ENCODE measurements at regions of chr9 and their contacts with region 1.

Region 1: GRCh38 chr9:36873247-36873875 is 160.7 kb downstream of the PAX5 start:
- DNase-seq: peak; percentile 86
- H3K4me3 ChIP-seq: no peak overlapping the region; a peak in 1 of 4 replicates
- H3K27ac ChIP-seq: no peak overlapping the region
- H3K4me1 ChIP-seq: peaks cover 0 to 5% of the 10 kb centered on the region in 2 experiments; a peak in 1 of 4 replicates
- H3K27me3 ChIP-seq: peaks cover 18% of the 10 kb centered on the region; the same call in 1 of the 2 replicates
- CTCF ChIP-seq: peak; percentile 92
- EP300 ChIP-seq: no peak
- RAD21 ChIP-seq: peak; percentile 89

Region 2: DNA sequence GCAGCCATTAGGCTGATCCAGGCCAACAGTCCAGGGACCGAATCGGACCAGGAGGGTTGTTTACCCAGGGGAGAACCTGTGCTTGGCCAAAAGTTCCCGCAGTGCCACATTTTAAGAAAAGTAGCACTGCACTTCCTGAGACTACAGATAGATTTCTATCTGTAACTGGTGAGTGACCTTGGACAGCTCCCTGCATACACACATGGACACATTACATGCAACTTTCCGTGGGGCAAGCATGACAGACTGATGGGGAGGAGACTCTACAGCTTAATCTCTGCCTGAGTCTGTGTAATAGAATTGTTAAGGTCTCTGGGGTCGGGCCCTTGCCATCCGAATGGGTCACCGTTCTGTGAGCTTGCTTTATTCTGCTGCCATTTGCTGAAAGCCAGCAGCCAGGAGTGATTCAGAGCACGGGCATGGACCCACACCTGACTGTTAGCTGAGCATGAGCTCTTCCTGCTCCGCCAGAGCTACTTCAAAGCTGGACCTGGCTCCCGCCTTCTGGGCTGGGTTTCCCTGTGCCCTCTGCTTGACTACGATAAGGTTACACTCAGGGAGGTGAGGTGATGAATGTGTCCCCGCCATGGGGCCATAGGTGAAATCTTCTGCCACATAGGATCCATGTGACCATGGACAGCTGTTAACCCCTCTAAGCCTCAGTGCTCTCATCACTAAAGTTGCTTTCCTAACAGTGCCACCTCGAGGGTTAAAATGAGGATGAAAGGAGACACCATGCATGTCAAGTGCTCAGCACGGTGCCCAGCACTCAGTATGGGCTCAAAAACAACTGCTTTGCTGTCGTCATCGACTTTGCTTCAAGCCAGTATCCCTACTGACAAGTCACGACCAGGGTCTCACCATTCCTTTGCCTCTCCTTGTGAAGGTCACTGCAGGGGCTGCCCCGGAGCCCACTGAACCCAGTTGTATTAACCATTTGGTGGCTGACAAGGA is 100.6 kb before region 1 on chr9:
- CTCF ChIA-PET with region 1: no interaction called
- POLR2A ChIA-PET with region 1: no interaction called
- DNase-seq: no peak
- H3K4me3 ChIP-seq: no peak overlapping the region
- H3K27ac ChIP-seq: no peak overlapping the region
- H3K4me1 ChIP-seq: no peaks in the 10 kb centered on the region
- H3K27me3 ChIP-seq: peaks cover 17% of the 10 kb centered on the region; the same call in 1 of the 2 replicates
- CTCF ChIP-seq: no peak
- EP300 ChIP-seq: no peak
- RAD21 ChIP-seq: no peak

Region 3: GRCh38 chr9:36891341-36891959 is 18.1 kb after region 1 on chr9:
- CTCF ChIA-PET with region 1: interaction called, 40 read pairs
- POLR2A ChIA-PET with region 1: no interaction called
- DNase-seq: peak; percentile 71
- H3K4me3 ChIP-seq: no peak overlapping the region
- H3K27ac ChIP-seq: peak overlapping the region in 1 of 2 experiments; percentile 36; a peak in 1 of 4 replicates
- H3K4me1 ChIP-seq: peaks cover 0 to 16% of the 10 kb centered on the region in 2 experiments; a peak in 2 of 4 replicates
- H3K27me3 ChIP-seq: peaks cover 18% of the 10 kb centered on the region; the same call in 1 of the 2 replicates
- CTCF ChIP-seq: no peak
- EP300 ChIP-seq: no peak
- RAD21 ChIP-seq: no peak

Region 4: DNA sequence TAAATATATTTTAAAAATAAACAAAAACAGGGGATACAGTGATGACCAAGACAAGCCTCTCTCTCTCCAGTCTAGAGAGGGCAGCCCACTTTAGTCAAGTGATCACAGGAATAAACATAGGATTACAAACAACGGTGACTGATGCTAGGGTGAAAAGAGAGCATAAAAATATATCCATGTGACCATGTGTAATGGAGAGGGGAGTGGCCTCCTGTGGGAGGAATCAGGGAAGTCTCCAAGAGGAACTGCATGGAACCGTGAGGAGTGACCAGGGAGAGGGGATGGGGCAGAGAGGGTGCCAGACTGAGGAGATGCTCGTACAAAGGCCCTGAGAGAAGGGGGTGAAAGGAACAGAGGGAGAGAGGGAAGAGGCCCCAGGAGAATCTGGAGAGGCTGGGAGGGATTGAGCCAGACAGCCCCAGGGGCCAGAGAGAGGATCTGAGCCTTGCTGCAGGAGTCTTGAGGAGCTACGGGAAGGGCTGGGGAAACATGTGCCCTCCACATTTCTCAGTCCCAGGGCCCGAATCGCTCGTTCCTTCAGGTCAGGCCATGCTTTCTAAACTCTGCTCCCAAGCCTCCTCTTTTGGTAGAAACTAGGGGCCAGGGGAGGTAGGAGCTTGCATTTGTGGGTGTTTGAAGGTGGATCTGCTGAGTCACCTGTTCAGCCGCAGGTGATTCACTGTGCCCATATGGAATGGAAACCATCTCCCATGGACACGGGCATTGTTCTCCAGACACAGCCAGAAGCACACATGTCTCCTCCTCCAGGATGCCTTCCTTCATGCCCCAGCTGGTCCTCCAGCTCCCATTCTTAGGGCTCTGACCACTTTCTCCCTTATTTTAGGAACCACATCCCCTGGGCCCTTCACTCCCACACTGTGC is 96.9 kb after region 1 on chr9:
- CTCF ChIA-PET with region 1: interaction called, 15 read pairs
- POLR2A ChIA-PET with region 1: no interaction called
- DNase-seq: no peak
- H3K4me3 ChIP-seq: no peak overlapping the region
- H3K27ac ChIP-seq: no peak overlapping the region
- H3K4me1 ChIP-seq: peaks cover 0 to 2% of the 10 kb centered on the region in 2 experiments; a peak in 1 of 4 replicates
- H3K27me3 ChIP-seq: no peaks in the 10 kb centered on the region; the same call in 1 of the 2 replicates
- CTCF ChIP-seq: no peak
- EP300 ChIP-seq: no peak
- RAD21 ChIP-seq: no peak

Region 5: DNA sequence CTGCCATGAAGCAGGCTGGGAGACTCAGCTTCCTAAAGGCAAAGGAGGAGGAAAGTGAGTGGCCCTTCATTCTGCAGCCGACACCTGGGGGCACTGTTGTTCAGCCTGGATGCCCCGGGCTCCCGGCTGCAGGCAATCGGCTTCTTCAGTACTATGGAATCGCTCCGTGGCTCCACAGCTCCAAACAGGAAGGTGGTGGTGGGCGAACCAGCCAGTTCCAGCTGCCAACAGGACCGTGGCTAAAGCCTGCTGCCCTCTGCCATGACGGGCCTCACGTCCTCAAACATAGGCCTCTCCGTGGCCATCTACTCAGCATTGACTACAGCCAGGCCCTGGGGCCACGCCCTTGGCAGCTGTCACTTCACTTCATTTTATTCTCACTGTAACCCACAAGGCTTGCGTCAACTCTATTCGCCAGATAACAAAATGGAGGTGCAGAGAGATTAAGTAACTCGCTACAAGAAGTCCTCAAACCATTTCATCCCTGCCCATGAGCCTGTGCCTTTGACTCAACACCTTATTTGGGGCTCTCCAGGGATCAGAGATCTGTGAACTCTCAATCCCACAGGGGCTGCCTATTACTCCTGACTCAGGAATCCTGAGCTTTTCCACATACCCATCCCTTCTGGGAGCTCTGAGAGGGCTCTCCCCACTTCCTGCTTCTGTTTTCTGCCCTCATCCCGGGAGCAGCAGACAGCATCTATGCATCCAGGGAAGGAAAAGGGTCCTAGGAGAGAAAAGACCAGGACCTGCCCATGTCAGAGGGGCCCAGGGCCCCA is 122.8 kb after region 1 on chr9:
- CTCF ChIA-PET with region 1: interaction called, 53 read pairs
- POLR2A ChIA-PET with region 1: interaction called, 3 read pairs
- DNase-seq: peak; percentile 44
- H3K4me3 ChIP-seq: no peak overlapping the region
- H3K27ac ChIP-seq: no peak overlapping the region
- H3K4me1 ChIP-seq: peaks cover 0 to 24% of the 10 kb centered on the region in 2 experiments; a peak in 3 of 4 replicates
- H3K27me3 ChIP-seq: peaks cover 7% of the 10 kb centered on the region; the same call in 1 of the 2 replicates
- CTCF ChIP-seq: peak; percentile 52
- EP300 ChIP-seq: no peak
- RAD21 ChIP-seq: peak; percentile 44; the same call in 1 of the 2 replicates

Region 6: DNA sequence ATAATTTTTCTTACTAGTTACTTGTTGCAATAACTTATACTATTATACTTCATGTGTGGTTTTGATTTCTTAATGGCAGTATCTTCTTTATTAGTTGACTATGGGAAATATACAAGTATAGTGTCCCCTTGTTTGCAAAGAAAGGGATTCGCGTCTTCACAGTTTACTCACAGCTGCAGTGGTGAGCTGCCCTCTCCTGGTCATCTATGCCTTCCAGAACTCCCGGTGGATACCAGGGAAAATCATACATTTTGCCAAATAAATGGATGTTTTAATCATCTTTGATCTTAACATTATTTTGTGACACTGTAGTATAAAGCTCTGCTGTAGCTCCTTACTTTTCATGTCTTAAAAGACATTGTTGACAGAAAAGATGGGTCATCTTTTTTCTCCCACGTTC is 389.0 kb after region 1 on chr9:
- CTCF ChIA-PET with region 1: interaction called, 11 read pairs
- POLR2A ChIA-PET with region 1: no interaction called
- DNase-seq: peak; percentile 30
- H3K4me3 ChIP-seq: no peak overlapping the region; a peak in 1 of 4 replicates
- H3K27ac ChIP-seq: no peak overlapping the region
- H3K4me1 ChIP-seq: peaks cover 0 to 2% of the 10 kb centered on the region in 2 experiments; a peak in 1 of 4 replicates
- H3K27me3 ChIP-seq: no peaks in the 10 kb centered on the region
- CTCF ChIP-seq: peak; percentile 69
- EP300 ChIP-seq: no peak
- RAD21 ChIP-seq: peak; percentile 87